GM10248 (cell line): ENCODE measurements at regions of chr1 and their contacts with region 1.

Region 1: DNA sequence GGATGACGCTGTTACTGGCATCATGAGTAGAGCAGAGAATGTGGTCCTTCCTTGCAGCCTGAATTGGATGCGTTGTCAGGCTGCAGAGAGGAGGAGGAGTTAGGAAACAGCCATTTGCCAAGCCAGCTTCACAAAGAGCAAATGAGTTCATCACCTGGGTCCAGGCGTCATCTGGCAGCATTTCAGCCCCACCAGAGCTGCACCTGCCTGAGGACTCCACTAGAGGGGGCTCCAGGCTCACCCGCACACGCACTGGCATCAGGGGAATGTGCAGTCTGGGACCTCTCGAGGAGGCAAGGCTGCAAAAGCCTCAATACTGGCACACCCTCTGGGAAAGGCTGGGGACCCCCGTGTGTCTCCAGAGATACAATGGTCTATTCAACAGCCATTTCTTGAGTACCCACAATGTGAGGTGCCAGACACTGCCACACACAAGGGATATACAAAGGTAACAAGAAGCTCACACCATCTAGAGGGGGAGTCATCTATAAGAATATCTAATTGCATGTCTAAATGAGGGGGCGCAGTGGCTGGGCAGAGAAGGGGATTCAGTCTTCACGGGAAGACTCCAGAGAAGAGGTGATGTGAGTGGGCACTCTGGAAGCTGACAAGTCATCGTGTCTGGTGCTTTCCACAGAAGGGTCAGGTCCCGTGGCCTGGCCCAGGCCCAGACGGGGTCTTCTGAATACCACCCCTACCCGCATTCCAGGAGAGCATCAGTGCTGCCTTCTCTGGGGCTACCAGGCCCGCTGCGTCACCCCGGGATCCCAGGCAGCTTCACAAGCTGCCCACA is 53.5 kb upstream of the CNTN2 start:
- DNase-seq: peak; percentile 87
- CTCF ChIP-seq: peak; percentile 92

Region 2: DNA sequence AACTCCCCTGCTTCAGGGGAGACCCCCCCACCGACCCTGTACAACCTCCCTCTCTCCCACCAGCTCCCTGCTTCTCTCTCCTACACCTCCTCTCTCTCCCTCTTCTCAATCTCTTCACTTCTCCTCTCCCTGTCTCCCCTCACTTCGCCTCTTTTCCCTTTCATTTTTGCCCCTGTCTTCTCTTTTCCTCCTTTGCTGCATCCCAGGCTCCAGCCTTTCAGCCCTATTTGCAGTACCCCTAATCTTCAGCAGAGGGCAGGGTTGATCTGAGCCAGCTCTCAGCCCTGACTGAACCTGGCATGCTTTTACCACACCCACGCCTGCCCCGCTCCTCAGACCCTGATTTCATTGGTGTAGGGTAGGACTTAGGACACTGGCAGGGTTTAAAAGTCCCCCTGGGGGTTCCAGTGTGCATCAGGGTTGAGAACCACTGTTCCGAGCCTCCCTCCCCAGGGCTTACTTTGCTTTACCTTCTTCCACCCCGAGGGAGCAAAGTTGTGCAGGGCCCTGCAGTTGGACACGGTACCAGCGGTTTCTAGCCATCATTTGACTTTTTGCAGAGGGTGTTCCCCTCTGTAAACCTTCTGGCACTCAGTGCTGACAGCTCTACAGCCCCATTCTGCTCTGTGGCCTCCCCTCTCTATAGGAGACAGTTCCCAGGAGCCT is 13.8 kb before region 1 on chr1:
- CTCF ChIA-PET with region 1: interaction called, 30 read pairs
- POLR2A ChIA-PET with region 1: no interaction called
- DNase-seq: peak; percentile 83
- CTCF ChIP-seq: peak; percentile 92

Region 3: DNA sequence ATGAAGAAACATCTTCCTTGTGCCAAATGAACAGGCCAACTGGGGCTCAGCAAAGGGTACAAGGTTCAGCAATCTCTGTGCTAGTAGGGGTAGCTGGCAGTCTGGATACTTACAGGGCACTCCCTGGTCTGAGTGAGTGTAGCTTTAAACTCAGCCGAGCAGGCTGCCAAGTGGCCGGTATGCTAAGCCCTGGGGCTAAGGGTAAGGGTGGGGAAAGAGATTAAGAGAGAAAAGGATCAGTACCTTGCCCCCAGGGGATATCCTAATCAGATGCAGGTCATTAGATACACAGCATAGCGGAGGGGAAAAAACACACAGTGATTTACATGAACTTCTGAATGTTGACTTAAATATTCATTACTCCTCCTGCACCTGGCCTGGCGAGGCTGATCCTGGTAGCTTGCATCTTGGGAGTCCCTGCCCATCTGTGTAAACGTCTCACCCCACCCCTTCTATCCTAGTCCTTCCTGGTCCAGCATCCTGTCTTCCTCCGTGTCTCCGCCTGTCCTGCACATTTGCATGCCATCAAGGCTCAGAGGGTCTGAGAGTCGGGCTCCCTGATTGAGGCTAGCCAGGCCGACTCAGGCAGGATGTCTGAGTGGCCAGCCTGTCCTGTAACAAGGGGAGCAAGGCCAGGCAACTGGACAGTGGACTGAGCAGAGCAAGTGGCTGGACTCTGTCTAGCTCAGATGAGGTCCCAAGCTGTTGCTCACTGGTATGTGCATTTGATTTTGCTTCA is 14.1 kb after region 1 on chr1:
- CTCF ChIA-PET with region 1: interaction called, 42 read pairs
- POLR2A ChIA-PET with region 1: no interaction called
- DNase-seq: no peak
- CTCF ChIP-seq: no peak

Region 4: DNA sequence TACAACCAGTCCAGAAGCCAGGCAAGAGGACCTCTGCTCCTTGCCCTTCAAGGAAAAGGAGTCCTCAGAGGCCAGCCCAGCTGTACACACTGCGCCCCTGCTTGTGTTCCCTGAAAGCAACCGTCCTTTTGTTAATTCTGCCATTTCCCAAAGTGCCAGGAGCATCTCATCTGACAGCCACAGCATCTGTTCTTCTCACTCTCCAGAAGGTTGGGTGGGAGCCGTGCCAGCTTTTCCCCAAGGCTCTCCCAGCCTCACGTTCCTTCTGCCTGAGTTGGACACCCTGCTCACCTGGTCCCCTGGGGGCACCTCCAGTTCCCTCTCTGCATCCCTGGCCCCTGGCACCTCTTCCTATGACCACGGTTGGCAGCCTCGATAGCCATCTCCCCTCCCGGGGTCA is 43.0 kb after region 1 on chr1:
- CTCF ChIA-PET with region 1: no interaction called
- POLR2A ChIA-PET with region 1: no interaction called
- DNase-seq: no peak
- CTCF ChIP-seq: no peak

Region 5: GRCh38 chr1:205077158-205077933 is 87.9 kb after region 1 on chr1:
- CTCF ChIA-PET with region 1: interaction called, 14 read pairs
- POLR2A ChIA-PET with region 1: no interaction called
- DNase-seq: no peak
- CTCF ChIP-seq: no peak

Region 6: DNA sequence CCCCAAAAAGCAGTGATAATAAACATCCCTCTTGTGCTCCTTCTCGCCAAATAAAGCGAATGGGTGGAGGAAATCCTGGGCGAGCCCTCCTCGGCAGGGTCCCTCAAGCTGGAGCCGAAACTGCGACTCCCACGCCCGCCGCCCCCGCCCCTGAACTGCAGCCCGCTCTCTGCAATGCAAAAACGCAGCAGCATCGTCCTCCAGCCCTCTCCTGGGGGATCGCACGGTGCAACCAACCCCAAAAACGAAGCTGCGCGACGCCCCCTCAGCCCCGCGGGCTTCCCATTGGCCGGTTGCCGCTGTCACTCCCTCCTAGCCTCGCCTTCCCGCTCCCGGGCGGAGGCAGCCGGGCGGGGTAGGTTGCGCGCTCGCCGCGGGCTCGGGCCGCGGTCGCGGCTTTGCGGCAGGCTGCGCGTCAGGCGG is 238.1 kb after region 1 on chr1 and contains the start of gene TMCC2:
- CTCF ChIA-PET with region 1: interaction called, 10 read pairs
- POLR2A ChIA-PET with region 1: no interaction called
- DNase-seq: peak; percentile 94
- CTCF ChIP-seq: no peak